Endothelial cell of umbilical vein (primary cell): ENCODE measurements at regions of chr2 and their contacts with region 1.

Region 1: DNA sequence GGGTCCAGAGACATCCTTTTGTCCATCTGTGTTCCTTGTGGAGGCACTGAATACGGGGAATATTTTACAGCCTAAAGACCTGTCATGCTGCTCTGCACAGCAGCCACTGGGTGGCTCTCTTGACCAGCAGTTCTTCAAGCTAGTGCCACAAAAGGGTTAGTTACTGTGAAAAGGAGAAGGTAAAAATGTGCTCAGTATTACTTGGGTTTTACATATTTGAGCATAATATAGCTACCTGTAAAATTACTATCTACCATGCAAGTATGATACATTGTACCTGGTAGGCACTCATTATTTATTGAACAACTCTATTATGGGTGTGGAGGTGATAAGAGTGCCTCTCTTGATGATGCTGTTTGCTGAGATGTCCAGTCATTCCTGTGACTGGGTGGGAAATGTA is 23.6 kb downstream of the FZD5 start:
- DNase-seq: peak; percentile 65
- H3K4me3 ChIP-seq: no peak overlapping the region
- H3K27ac ChIP-seq: no peak overlapping the region
- H3K4me1 ChIP-seq: no peaks in the 10 kb centered on the region
- H3K27me3 ChIP-seq: no peaks in the 10 kb centered on the region
- CTCF ChIP-seq: peak; percentile 83 to 87
- POLR2A ChIP-seq: no peak

Region 2: GRCh38 chr2:207725873-207726578 is 20.1 kb before region 1 on chr2:
- CTCF ChIA-PET with region 1: interaction called, 12 read pairs
- POLR2A ChIA-PET with region 1: no interaction called
- dilution Hi-C with region 1: no loop called
- intact Hi-C with region 1: no loop called
- DNase-seq: peak; percentile 62
- H3K4me3 ChIP-seq: no peak overlapping the region
- H3K27ac ChIP-seq: no peak overlapping the region
- H3K4me1 ChIP-seq: peaks cover 20% of the 10 kb centered on the region
- H3K27me3 ChIP-seq: no peaks in the 10 kb centered on the region
- CTCF ChIP-seq: no peak
- POLR2A ChIP-seq: no peak

Region 3: GRCh38 chr2:207796585-207797350 is 50.6 kb after region 1 on chr2:
- CTCF ChIA-PET with region 1: no interaction called
- POLR2A ChIA-PET with region 1: no interaction called
- dilution Hi-C with region 1: no loop called
- intact Hi-C with region 1: no loop called
- DNase-seq: no peak
- H3K4me3 ChIP-seq: no peak overlapping the region
- H3K27ac ChIP-seq: no peak overlapping the region
- H3K4me1 ChIP-seq: peaks cover 8% of the 10 kb centered on the region
- H3K27me3 ChIP-seq: no peaks in the 10 kb centered on the region
- CTCF ChIP-seq: no peak
- POLR2A ChIP-seq: no peak

Region 4: GRCh38 chr2:207974216-207974605 is 228.1 kb after region 1 on chr2:
- CTCF ChIA-PET with region 1: interaction called, 82 read pairs
- POLR2A ChIA-PET with region 1: no interaction called
- dilution Hi-C with region 1: no loop called
- intact Hi-C with region 1: loop called (anchors 1 kb)
- DNase-seq: no peak
- H3K4me3 ChIP-seq: no peak overlapping the region
- H3K27ac ChIP-seq: no peak overlapping the region
- H3K4me1 ChIP-seq: no peaks in the 10 kb centered on the region
- H3K27me3 ChIP-seq: no peaks in the 10 kb centered on the region
- CTCF ChIP-seq: no peak
- POLR2A ChIP-seq: no peak

Region 5: DNA sequence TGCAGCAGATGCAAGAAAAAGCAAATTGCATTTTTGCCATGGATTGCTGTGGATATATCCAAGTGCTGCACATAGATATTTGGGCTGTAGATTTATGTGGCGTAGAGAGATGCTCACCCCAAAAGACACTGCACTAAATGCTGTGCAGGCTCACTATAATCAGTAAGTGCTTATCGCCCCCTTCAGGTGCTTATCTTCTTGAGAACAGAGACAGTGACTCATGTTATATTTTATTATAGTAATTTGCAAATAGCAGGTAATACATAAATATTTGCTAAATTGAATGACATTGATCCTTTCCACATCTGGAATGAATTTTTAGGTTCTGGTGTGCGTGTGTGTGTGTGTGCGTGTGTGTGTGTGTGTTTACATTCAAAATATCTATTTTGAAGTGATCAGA is 316.0 kb after region 1 on chr2:
- CTCF ChIA-PET with region 1: interaction called, 11 read pairs
- POLR2A ChIA-PET with region 1: no interaction called
- dilution Hi-C with region 1: no loop called
- intact Hi-C with region 1: no loop called
- DNase-seq: peak; percentile 30
- H3K4me3 ChIP-seq: no peak overlapping the region
- H3K27ac ChIP-seq: no peak overlapping the region
- H3K4me1 ChIP-seq: no peaks in the 10 kb centered on the region
- H3K27me3 ChIP-seq: no peaks in the 10 kb centered on the region
- CTCF ChIP-seq: peak; percentile 19 to 33
- POLR2A ChIP-seq: no peak

Region 6: GRCh38 chr2:208254871-208255556 is 508.9 kb after region 1 on chr2 and contains the start of gene IDH1:
- CTCF ChIA-PET with region 1: interaction called, 12 read pairs
- POLR2A ChIA-PET with region 1: no interaction called
- dilution Hi-C with region 1: no loop called
- intact Hi-C with region 1: no loop called
- DNase-seq: peak; percentile 95
- H3K4me3 ChIP-seq: peak within 1 kb of the TSS; percentile 74 to 99 (median 99)
- H3K27ac ChIP-seq: peak within 1 kb of the TSS; percentile 50
- H3K4me1 ChIP-seq: peaks cover 24% of the 10 kb centered on the region
- H3K27me3 ChIP-seq: no peaks in the 10 kb centered on the region
- CTCF ChIP-seq: peak; percentile 52 to 74
- POLR2A ChIP-seq: peak; percentile 58
- total RNA-seq, gene IDH1: 107 and 124 TPM in 2 replicates